T-cell (primary cell): ENCODE measurements at regions of chr14 and their contacts with region 1.

Region 1: GRCh38 chr14:52175982-52176502 is 91.5 kb upstream of the PTGDR start:
- DNase-seq: peak in 32 of 35 experiments; percentile 4 to 78 (median 42)
- ATAC-seq: peak; percentile 77 to 96 (median 92)
- H3K4me3 ChIP-seq: peak overlapping the region in 1 of 2 donors; percentile 15
- H3K4me3 Mint-ChIP-seq: peak overlapping the region; percentile 2 to 69 (median 57)
- H3K27ac ChIP-seq: peak overlapping the region; percentile 73
- H3K27ac Mint-ChIP-seq: peak overlapping the region; percentile 68 to 91
- H3K4me1 ChIP-seq: peaks cover 15 to 41% of the 10 kb centered on the region in 2 experiments
- H3K4me1 Mint-ChIP-seq: peaks cover 28 to 42% (median 33%) of the 10 kb centered on the region in 3 donors
- H3K27me3 ChIP-seq: no peaks in the 10 kb centered on the region
- H3K27me3 Mint-ChIP-seq: no peaks in the 10 kb centered on the region

Region 2: GRCh38 chr14:50954811-50955372 is 1221.2 kb before region 1 on chr14:
- CTCF ChIA-PET with region 1: no interaction called
- POLR2A ChIA-PET with region 1: no interaction called
- DNase-seq: peak in 1 of 35 experiments; percentile 31
- ATAC-seq: no peak
- H3K4me3 ChIP-seq: no peak overlapping the region
- H3K4me3 Mint-ChIP-seq: no peak overlapping the region
- H3K27ac ChIP-seq: no peak overlapping the region
- H3K27ac Mint-ChIP-seq: no peak overlapping the region
- H3K4me1 ChIP-seq: no peaks in the 10 kb centered on the region
- H3K4me1 Mint-ChIP-seq: no peaks in the 10 kb centered on the region
- H3K27me3 ChIP-seq: peaks cover 0 to 2% of the 10 kb centered on the region in 2 experiments
- H3K27me3 Mint-ChIP-seq: no peaks in the 10 kb centered on the region

Region 3: DNA sequence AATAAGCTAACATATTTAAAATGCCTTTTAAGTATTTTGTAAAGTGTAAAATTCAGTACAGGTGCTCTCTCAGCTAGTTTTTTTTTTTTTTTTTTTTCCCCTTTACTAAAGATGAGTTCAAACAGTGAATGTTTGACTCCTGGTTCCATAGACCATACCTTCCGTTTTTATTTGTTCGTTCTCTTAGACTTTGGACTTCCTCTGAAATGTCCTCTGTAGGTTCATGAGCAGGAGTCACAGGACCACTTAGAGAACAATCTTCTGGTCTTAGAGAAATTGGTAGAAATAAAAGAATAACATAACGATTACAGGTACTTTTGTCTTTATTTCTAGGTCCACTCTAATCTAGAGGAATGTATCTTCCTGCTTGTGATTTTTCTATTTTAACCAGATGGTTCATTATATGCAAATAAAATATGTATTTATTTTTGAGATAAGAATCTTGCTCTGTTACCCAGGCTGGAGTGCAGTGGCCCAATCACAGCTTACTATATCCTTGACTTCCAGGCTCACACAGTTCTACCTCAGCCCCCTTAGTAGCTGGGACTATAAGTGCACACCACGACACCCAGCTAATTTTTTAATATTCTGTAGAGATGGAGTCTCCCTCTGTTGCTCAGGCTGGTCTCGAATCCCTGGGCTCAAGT is 579.7 kb after region 1 on chr14:
- CTCF ChIA-PET with region 1: no interaction called
- POLR2A ChIA-PET with region 1: interaction called in 1 of 2 experiments, 10 read pairs
- DNase-seq: no peak
- ATAC-seq: no peak
- H3K4me3 ChIP-seq: no peak overlapping the region
- H3K4me3 Mint-ChIP-seq: no peak overlapping the region
- H3K27ac ChIP-seq: no peak overlapping the region
- H3K27ac Mint-ChIP-seq: peak overlapping the region in 1 of 2 donors; percentile 22
- H3K4me1 ChIP-seq: no peaks in the 10 kb centered on the region
- H3K4me1 Mint-ChIP-seq: peaks cover 3 to 5% (median 5%) of the 10 kb centered on the region in 3 donors
- H3K27me3 ChIP-seq: no peaks in the 10 kb centered on the region
- H3K27me3 Mint-ChIP-seq: no peaks in the 10 kb centered on the region